SK-N-SH (cell line): ENCODE measurements at regions of chr10 and their contacts with region 1.

Region 1: DNA sequence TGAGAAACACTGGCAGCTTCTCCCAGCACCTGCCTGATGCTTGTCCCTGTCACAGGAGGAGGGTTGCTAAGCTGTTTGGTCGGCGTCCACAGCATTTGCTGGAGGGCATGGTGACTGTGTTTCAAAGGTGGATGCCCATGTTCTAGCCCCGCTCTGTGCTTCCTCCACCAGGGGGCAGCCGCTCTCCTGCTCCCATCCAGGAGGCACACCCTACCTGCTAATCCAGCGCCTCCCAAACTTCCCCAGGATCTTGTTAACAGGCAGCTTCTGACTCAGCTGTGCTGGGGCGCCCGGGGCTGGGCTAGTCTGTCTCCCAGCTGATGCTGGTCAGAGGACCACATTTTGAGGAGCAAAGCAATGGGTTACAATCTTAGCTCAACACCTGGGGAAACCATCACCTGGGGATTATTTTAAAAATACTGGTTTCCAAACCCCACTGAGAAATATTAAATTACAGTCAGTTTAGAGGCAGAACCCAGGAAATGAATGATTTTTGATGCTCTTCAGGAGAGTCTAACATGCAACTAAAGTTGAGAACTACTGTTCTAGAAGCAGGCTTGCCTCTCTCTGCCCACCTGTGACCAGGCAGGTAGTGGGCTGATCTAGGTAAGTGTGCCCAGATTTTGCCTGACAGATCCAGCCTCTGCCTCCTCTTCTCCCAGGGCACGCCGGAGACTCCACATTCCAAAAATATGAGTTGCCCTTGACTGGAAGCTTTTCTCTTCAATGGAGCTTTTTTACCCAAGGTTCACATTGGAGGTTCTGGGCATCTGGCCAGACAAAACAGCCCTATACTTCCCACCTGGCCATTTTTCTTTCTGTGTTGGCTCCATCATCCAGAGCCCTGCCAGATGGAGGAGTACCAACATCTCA is 92.7 kb upstream of the GPR26 start:
- DNase-seq: peak; percentile 51
- H3K4me3 ChIP-seq: no peak overlapping the region; a peak in 1 of 4 replicates
- H3K27ac ChIP-seq: no peak overlapping the region
- H3K4me1 ChIP-seq: no peaks in the 10 kb centered on the region
- H3K27me3 ChIP-seq: no peaks in the 10 kb centered on the region
- CTCF ChIP-seq: peak; percentile 19; the same call in 1 of the 2 replicates
- EP300 ChIP-seq: no peak
- RAD21 ChIP-seq: no peak

Region 2: GRCh38 chr10:123380497-123381085 is 192.9 kb before region 1 on chr10:
- CTCF ChIA-PET with region 1: no interaction called
- POLR2A ChIA-PET with region 1: no interaction called
- DNase-seq: peak; percentile 58
- H3K4me3 ChIP-seq: no peak overlapping the region
- H3K27ac ChIP-seq: no peak overlapping the region
- H3K4me1 ChIP-seq: no peaks in the 10 kb centered on the region; a peak in 1 of 4 replicates
- H3K27me3 ChIP-seq: no peaks in the 10 kb centered on the region
- CTCF ChIP-seq: peak; percentile 30; the same call in 1 of the 2 replicates
- EP300 ChIP-seq: no peak
- RAD21 ChIP-seq: peak; percentile 83

Region 3: GRCh38 chr10:123967396-123968243 is 394.1 kb after region 1 on chr10:
- CTCF ChIA-PET with region 1: interaction called, 276 read pairs
- POLR2A ChIA-PET with region 1: no interaction called
- DNase-seq: peak; percentile 91
- H3K4me3 ChIP-seq: peak overlapping the region in 1 of 2 experiments; percentile 31; a peak in 1 of 4 replicates
- H3K27ac ChIP-seq: no peak overlapping the region
- H3K4me1 ChIP-seq: peaks cover 0 to 5% of the 10 kb centered on the region in 2 experiments; a peak in 1 of 4 replicates
- H3K27me3 ChIP-seq: no peaks in the 10 kb centered on the region
- CTCF ChIP-seq: peak; percentile 49
- EP300 ChIP-seq: no peak
- RAD21 ChIP-seq: peak; percentile 93